Mammary epithelial cell (primary cell): ENCODE measurements at regions of chr4 and their contacts with region 1.

Region 1: DNA sequence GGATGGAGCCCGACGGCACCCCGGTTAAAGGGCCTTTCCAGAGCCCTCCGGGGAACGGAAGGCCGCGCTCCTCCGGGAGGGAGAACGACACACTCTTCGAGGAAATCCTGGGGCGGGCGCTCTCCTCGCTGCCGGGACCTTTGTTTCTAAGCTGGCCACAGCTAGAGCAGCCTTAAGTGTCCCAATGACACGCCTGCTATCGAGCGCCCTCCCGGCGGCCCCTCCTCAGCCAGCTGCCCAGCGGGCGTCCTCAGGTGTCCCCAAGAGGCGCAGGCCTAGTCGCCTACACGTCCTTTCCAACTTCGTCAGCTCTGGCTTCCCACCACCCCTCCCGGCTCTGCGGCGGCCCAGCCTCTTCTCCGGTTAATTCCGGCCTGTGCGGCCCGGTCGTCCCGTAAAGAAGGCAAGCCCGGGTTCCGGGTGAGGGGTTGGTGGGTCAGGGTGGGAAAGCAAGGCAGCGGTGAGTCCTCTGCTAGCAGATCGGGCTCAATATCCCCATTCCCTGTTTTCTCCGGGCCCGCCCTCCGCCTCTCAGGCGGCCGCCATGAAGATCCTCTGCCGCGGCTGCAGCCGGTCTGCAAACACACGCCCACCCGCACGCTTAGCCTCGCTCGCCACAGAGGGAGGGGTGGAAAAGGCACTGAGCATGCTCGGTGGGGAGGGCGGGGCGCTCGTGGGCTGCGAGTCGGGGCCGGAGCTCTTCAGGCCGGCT is 449 bp upstream of the RAP1GDS1 start:
- DNase-seq: peak; percentile 94
- H3K4me3 ChIP-seq: peak overlapping the region; percentile 67 to 78 (median 72)
- H3K27ac ChIP-seq: peak overlapping the region; percentile 84
- H3K4me1 ChIP-seq: peaks cover 13% of the 10 kb centered on the region
- H3K27me3 ChIP-seq: no peaks in the 10 kb centered on the region
- CTCF ChIP-seq: no peak

Region 2: GRCh38 chr4:98143001-98143899 is 117.5 kb before region 1 on chr4 and contains the start of gene STPG2:
- CTCF ChIA-PET with region 1: no interaction called
- dilution Hi-C with region 1: no loop called
- in situ Hi-C with region 1: no loop called
- intact Hi-C with region 1: loop called (anchors 5 kb)
- DNase-seq: peak; percentile 93
- H3K4me3 ChIP-seq: peak within 1 kb of the TSS; percentile 64 to 76 (median 69)
- H3K27ac ChIP-seq: peak within 1 kb of the TSS; percentile 78
- H3K4me1 ChIP-seq: peaks cover 12% of the 10 kb centered on the region
- H3K27me3 ChIP-seq: no peaks in the 10 kb centered on the region
- CTCF ChIP-seq: peak; percentile 53 to 73
- total RNA-seq, gene STPG2: 0.17 to 0.28 TPM

Region 3: DNA sequence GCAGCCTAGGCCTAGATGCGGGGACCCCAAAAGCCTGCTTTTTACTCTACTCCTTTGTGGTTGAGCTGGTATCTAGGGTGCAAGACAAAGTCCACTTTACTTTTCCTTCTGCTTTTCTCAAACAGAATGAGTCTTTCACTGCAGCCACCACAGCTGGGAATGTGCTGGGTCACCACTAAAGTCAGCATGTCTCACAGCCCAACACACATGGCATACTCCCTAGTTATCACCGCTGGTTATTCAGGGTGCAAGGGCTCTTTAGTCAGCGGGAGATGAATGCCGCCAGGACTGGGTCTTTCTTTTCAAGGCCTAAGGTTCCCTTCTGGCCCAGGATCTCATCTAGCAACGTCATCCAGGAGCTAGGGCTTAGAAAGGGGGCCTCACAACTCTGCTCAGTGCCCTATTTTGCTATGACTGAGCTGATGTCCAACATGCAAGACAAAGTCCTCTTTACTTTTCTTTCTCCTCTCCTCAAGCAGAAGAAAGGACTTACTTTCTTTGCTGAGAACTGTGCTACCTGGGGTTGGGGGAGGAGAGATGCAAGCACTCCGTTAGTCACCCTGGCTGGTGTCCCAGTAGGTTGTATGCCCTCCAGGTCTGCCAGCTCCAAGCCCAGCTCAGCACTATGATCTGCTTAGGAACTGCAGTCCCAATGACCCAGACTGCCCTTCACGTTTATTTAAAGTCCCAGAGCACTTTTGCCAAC is 94.6 kb before region 1 on chr4:
- CTCF ChIA-PET with region 1: no interaction called
- dilution Hi-C with region 1: no loop called
- in situ Hi-C with region 1: loop called in 1 of 2 experiments (anchors 25 kb)
- intact Hi-C with region 1: loop called (anchors 5 kb)
- DNase-seq: peak; percentile 84
- H3K4me3 ChIP-seq: no peak overlapping the region
- H3K27ac ChIP-seq: no peak overlapping the region
- H3K4me1 ChIP-seq: peaks cover 12% of the 10 kb centered on the region
- H3K27me3 ChIP-seq: no peaks in the 10 kb centered on the region
- CTCF ChIP-seq: no peak

Region 4: GRCh38 chr4:98430708-98431403 is 170.1 kb after region 1 on chr4:
- CTCF ChIA-PET with region 1: no interaction called
- dilution Hi-C with region 1: no loop called
- in situ Hi-C with region 1: no loop called
- intact Hi-C with region 1: loop called (anchors 2 kb)
- DNase-seq: peak; percentile 96
- H3K4me3 ChIP-seq: peak overlapping the region in 1 of 3 experiments; percentile 3
- H3K27ac ChIP-seq: peak overlapping the region; percentile 93
- H3K4me1 ChIP-seq: peaks cover 40% of the 10 kb centered on the region
- H3K27me3 ChIP-seq: no peaks in the 10 kb centered on the region
- CTCF ChIP-seq: no peak

Region 5: DNA sequence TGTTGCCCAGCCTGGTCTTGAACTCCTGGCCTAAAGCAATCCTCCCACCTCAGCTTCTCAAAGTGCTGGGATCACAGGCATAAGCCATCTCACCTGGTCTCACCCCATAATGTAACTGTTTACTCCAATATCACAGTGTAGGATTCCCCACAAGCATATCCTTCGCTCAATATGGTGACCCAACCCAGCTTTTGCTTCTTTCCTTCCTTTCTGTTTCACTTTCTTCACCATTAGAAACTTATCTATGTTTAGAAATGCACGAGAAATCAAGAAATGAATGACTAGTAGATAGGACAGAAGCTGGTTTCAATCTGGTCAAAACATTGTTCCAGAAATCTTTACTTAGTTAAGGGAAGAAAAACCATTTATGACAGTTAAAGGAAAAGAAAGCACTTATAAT is 378.8 kb after region 1 on chr4:
- CTCF ChIA-PET with region 1: no interaction called
- dilution Hi-C with region 1: no loop called
- in situ Hi-C with region 1: no loop called
- intact Hi-C with region 1: no loop called
- DNase-seq: no peak
- H3K4me3 ChIP-seq: no peak overlapping the region
- H3K27ac ChIP-seq: no peak overlapping the region
- H3K4me1 ChIP-seq: peaks cover 13% of the 10 kb centered on the region
- H3K27me3 ChIP-seq: no peaks in the 10 kb centered on the region
- CTCF ChIP-seq: no peak

Region 6: DNA sequence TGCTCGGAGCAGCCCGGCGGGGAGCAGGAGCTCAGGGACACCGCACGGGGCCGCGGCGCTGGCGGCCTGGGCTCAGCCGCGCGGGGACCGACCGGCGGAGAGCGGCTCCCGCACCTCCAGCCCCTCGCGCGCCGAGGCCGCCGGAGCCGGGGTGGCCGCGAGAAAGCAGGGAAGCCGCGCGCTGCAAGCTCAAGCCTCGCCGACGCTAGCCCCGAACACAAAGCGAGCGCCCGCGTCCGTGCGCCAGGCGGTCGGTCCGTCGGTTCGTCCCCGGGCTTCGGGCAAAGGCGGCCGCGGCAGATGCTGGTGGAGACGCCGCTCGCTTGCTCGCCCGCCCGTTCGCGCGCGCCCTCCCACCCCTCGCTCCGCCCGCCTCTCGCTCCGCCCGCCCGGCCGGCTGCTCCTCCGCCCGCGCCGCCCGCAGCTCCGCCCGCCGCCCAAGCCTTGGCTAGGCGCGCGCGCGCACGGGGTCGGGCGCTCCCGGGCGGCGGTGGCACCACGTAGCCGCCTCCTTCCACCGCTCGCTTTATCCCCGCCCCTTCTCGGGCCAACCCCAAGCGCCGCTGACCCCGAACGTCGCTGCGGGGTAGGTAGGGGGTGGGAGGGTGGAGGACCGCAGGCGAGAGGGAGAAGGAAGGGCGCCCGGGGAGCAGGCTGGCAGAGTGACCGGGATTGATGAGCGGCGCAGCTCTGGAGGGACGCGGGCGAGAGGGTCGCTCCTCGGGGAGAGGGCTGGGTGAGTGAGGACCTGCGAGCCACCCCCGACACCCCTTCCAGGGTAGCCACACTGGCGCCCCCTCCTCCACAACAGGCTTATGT is 397.8 kb after region 1 on chr4 and contains the start of gene TSPAN5:
- CTCF ChIA-PET with region 1: no interaction called
- dilution Hi-C with region 1: no loop called
- in situ Hi-C with region 1: no loop called
- intact Hi-C with region 1: loop called (anchors 5 kb)
- DNase-seq: peak; percentile 80
- H3K4me3 ChIP-seq: peak within 1 kb of the TSS; percentile 65 to 89 (median 83)
- H3K27ac ChIP-seq: peak within 1 kb of the TSS; percentile 57
- H3K4me1 ChIP-seq: peaks cover 57% of the 10 kb centered on the region
- H3K27me3 ChIP-seq: no peaks in the 10 kb centered on the region
- CTCF ChIP-seq: no peak
- total RNA-seq, gene TSPAN5: 19.0 to 38.4 TPM